ENCODE measurements at regions of chrX and their contacts with region 1.

Region 1: GRCh38 chrX:120560842-120561633 is at the start of gene CUL4B:
- DNase-seq: peak; percentile 86
- ATAC-seq: peak; percentile 86
- H3K4me3 Mint-ChIP-seq: peak within 1 kb of the TSS; percentile 93
- H3K27ac Mint-ChIP-seq: peak within 1 kb of the TSS; percentile 98
- H3K4me1 Mint-ChIP-seq: peaks cover 14% of the 10 kb centered on the region
- H3K27me3 Mint-ChIP-seq: no peaks in the 10 kb centered on the region
- CTCF ChIP-seq: no peak
- total RNA-seq, gene CUL4B: 38.9 to 42.3 TPM (median 42.3 TPM) in 3 replicates

Region 2: GRCh38 chrX:120603707-120604360 is 42.8 kb after region 1 on chrX and contains the start of gene MCTS1:
- CTCF ChIA-PET with region 1: interaction called, 3 read pairs
- POLR2A ChIA-PET with region 1: interaction called, 21 read pairs
- DNase-seq: peak; percentile 70
- ATAC-seq: peak; percentile 98
- H3K4me3 Mint-ChIP-seq: peak within 1 kb of the TSS; percentile 94
- H3K27ac Mint-ChIP-seq: peak within 1 kb of the TSS; percentile 97
- H3K4me1 Mint-ChIP-seq: peaks cover 5% of the 10 kb centered on the region
- H3K27me3 Mint-ChIP-seq: peaks cover 7% of the 10 kb centered on the region
- CTCF ChIP-seq: no peak
- total RNA-seq, gene MCTS1: 22.8 to 30.4 TPM (median 28.2 TPM) in 3 replicates